Gastrocnemius medialis (tissue), 4 donors: ENCODE measurements at regions of chr1 and their contacts with region 1.

Region 1: DNA sequence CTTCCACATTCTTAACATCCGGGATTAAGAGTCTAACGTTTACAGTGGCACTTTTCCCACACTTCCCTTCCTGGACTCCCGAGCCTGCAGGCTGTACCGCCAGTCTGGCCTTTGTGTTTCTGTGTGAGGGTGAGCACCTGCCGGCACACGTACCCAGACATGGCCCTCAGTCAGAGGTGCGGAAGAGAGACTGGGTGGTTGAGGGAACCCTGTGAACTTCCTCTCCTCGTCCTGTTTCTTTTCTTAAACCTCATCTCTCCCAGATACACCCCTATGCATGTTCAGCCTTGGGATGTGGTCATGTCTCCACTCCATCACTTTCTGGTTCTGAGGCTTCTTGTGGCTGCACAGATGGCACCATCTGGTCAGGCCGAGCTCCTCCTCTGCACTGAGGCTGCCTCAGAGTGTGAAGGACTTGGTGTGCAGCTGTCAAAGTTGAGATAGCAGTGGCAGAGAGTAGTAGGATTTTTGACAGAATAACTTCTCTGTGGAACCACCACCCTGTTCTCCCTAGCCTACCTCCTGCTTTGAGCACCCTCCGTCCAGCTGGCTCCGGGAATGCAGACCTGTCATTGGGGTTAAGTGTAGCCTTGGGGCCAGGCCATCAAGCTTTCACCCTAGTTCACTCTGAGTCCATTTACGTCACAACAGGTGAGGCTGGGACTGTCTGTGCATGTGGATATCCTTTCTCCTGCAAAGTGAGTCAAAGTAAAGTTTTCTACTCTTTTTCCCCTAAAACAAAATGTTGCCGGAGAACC is 31.4 kb downstream of the VASH2 start:
- DNase-seq: no peak
- ATAC-seq: no peak
- H3K4me3 ChIP-seq: no peak overlapping the region
- H3K27ac ChIP-seq: peak overlapping the region; percentile 35 to 70 (median 59)
- H3K4me1 ChIP-seq: peaks cover 45 to 46% of the 10 kb centered on the region in 2 donors
- H3K27me3 ChIP-seq: no peaks in the 10 kb centered on the region
- CTCF ChIP-seq: no peak
- POLR2A ChIP-seq: no peak

Region 2: DNA sequence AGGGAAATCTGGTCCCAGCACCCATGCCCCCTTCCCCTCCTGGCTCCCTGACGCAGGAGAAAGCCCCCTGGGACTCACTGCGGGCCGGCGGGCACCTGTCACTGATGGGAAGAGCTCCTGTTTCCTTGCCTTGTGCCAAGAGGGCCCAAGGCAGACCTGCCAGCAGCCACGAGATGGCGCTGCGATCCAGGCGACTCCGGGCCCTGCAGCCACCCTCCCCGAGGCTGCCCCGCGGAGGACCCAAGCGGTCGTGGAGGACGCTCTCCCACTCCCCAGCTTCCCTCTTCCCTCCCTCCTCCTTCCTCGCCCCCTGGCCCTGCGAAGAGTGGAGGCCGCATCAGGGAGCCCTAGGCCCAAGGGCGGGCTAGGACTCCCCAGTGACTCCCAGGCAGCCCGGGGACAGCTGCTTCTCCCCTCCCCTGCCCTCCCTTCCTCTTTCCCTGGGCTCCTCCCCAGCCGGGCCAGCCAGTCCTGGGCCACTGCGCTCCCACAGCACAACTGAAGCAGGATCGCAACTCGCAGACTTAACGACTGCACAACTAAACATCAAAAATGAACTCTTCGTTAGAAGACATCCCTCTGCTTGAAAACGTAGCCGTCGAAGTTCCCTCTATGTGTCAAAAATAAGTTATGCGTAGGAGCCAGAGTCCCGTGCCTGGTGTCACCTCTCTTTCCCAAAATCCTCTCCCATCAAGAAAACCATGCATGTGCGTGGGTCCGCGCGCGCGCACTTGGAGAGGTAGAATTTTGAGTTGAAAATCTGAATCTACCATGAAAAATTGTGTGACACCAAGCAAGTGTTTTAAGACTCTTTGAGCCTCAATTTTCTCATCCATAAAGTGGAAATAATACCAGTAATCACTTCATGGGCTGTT is 316.3 kb before region 1 on chr1:
- in situ Hi-C with region 1: loop called in 1 of 4 experiments (anchors 25 kb)
- intact Hi-C with region 1: no loop called
- DNase-seq: peak; percentile 31 to 64
- ATAC-seq: peak; percentile 88 to 96
- H3K4me3 ChIP-seq: peak overlapping the region; percentile 61 to 73 (median 66)
- H3K27ac ChIP-seq: peak overlapping the region; percentile 39 to 74 (median 66)
- H3K4me1 ChIP-seq: peaks cover 0 to 23% of the 10 kb centered on the region in 2 donors
- H3K27me3 ChIP-seq: no peaks in the 10 kb centered on the region
- CTCF ChIP-seq: peak; percentile 83 to 92 (median 87)
- POLR2A ChIP-seq: no peak

Region 3: GRCh38 chr1:212814537-212815334 is 167.0 kb before region 1 on chr1:
- in situ Hi-C with region 1: loop called in 2 of 4 experiments (anchors 25 kb)
- intact Hi-C with region 1: no loop called
- DNase-seq: no peak
- ATAC-seq: no peak
- H3K4me3 ChIP-seq: no peak overlapping the region
- H3K27ac ChIP-seq: no peak overlapping the region
- H3K4me1 ChIP-seq: no peaks in the 10 kb centered on the region
- H3K27me3 ChIP-seq: no peaks in the 10 kb centered on the region
- CTCF ChIP-seq: peak in 1 of 5 experiments; percentile 44
- POLR2A ChIP-seq: no peak

Region 4: DNA sequence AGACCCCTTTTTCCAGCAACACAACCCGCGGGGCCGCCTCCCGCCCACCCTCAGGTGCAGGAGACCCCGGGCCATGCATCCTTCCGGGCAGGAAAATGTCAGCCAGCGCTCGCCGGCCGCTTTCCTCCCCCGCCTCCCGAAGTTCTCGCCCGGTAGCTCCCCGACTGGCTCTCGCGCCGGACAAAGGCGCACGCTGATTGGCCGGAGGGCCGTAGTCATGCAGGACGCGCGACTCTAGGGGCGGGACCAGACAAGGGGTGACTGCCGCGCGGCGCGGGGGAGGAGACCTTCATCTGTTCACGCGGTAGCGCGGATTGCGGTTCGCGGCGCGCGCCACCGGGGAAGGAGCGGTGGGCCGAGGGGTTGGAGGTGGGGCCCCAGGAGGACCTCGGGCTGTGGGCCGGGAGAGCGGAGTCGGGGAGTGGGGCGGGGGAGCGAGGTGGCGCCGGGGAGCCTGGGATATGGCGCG is 123.7 kb before region 1 on chr1 and contains the start of gene FLVCR1:
- in situ Hi-C with region 1: no loop called
- intact Hi-C with region 1: loop called (anchors 5 kb)
- DNase-seq: peak; percentile 94
- ATAC-seq: peak; percentile 97 to 98
- H3K4me3 ChIP-seq: peak within 1 kb of the TSS; percentile 86 to 98 (median 96)
- H3K27ac ChIP-seq: peak within 1 kb of the TSS; percentile 84 to 87 (median 86)
- H3K4me1 ChIP-seq: peaks cover 7 to 14% of the 10 kb centered on the region in 2 donors
- H3K27me3 ChIP-seq: no peaks in the 10 kb centered on the region
- CTCF ChIP-seq: no peak
- POLR2A ChIP-seq: peak; percentile 59 to 75
- total RNA-seq, gene FLVCR1: 0.66 to 19.8 (median 1.7) TPM

Region 5: DNA sequence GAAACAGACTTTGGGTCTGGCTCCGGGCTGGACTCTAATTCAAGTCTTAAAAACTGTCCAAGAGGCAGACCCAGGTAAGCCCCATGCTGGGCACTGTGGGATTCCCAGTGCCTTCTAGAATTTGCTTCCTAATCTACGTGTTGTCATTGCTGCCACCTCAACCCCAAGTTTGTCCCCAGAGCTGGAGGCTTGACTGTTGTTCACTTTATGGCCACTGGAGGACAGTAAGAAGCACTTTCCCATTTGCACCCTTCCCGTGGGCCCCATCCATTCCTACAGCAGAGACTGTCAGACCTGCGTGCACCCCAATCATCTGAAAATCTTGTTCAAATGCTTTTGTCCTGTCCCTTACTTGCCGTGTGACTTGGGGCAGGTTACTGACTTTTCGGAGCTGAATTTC is 60.9 kb before region 1 on chr1:
- in situ Hi-C with region 1: no loop called
- intact Hi-C with region 1: loop called (anchors 5 kb)
- DNase-seq: no peak
- ATAC-seq: no peak
- H3K4me3 ChIP-seq: no peak overlapping the region
- H3K27ac ChIP-seq: no peak overlapping the region
- H3K4me1 ChIP-seq: no peaks in the 10 kb centered on the region
- H3K27me3 ChIP-seq: no peaks in the 10 kb centered on the region
- CTCF ChIP-seq: no peak
- POLR2A ChIP-seq: no peak

Region 6: GRCh38 chr1:213015099-213016050 is 33.6 kb after region 1 on chr1 and contains the start of gene ANGEL2:
- in situ Hi-C with region 1: no loop called
- intact Hi-C with region 1: loop called (anchors 1 kb)
- DNase-seq: peak; percentile 92 to 96
- ATAC-seq: peak; percentile 99 to 100
- H3K4me3 ChIP-seq: peak within 1 kb of the TSS; percentile 64 to 96 (median 90)
- H3K27ac ChIP-seq: peak within 1 kb of the TSS; percentile 81 to 92 (median 86)
- H3K4me1 ChIP-seq: peaks cover 16 to 20% of the 10 kb centered on the region in 2 donors
- H3K27me3 ChIP-seq: no peaks in the 10 kb centered on the region
- CTCF ChIP-seq: no peak
- POLR2A ChIP-seq: peak in 1 of 2 donors; percentile 27
- total RNA-seq, gene ANGEL2: 17.7 to 33.2 (median 25.1) TPM

Region 7: GRCh38 chr1:213032651-213033050 is 50.9 kb after region 1 on chr1:
- in situ Hi-C with region 1: no loop called
- intact Hi-C with region 1: no loop called
- DNase-seq: no peak
- ATAC-seq: no peak
- H3K4me3 ChIP-seq: no peak overlapping the region
- H3K27ac ChIP-seq: no peak overlapping the region
- H3K4me1 ChIP-seq: no peaks in the 10 kb centered on the region
- H3K27me3 ChIP-seq: peaks cover 7 to 25% (median 12%) of the 10 kb centered on the region in 3 donors
- CTCF ChIP-seq: no peak
- POLR2A ChIP-seq: no peak